Activated naive CD4-positive, alpha-beta T cell treated with anti-CD3 and anti-CD28 coated beads for 36 hours (primary cell): ENCODE measurements at regions of chr6 and their contacts with region 1.

Region 1: GRCh38 chr6:157800420-157801237 is 22.4 kb upstream of the SNX9 start:
- DNase-seq: peak; percentile 69
- H3K4me3 Mint-ChIP-seq: peak overlapping the region; percentile 6
- H3K27ac Mint-ChIP-seq: peak overlapping the region; percentile 73
- H3K4me1 Mint-ChIP-seq: peaks cover 70% of the 10 kb centered on the region
- H3K27me3 Mint-ChIP-seq: no peaks in the 10 kb centered on the region

Region 2: DNA sequence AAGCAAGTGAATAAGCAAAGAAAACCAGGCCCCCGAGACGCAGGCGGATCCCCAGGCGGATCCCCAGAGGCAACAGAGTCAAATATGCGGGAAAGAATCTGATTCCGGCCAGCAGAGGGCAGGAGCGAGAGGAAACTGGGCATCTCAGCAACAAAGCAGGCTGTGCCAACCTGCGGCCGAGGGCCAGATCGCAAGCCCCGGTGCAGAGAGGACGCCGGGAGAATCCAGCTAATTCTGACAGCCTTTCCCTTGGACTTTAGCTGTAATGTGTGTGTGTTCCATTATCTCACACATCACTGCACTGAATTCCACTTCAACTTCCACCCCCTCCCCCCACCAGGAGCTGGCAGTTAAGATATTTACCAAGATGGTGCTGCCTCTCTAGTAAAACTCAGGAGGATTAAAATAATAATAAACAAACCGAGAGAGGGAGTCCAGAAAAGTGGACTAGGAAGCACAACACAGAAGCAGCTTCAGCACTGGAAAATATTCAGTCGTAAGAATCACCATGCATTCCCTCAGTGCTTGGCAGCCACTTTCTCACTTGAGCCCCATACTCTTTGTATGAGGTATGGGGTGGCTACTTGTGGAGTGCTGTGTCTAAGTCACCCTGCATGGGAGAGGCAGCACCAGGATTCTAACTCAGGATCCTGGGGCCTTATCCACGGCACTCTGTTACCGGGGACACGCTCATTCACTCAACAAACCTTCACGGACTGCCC is 43.8 kb before region 1 on chr6:
- CTCF ChIA-PET with region 1: interaction called, 15 read pairs
- intact Hi-C with region 1: no loop called
- DNase-seq: peak; percentile 94
- H3K4me3 Mint-ChIP-seq: peak overlapping the region; percentile 28
- H3K27ac Mint-ChIP-seq: peak overlapping the region; percentile 89
- H3K4me1 Mint-ChIP-seq: peaks cover 93% of the 10 kb centered on the region
- H3K27me3 Mint-ChIP-seq: no peaks in the 10 kb centered on the region

Region 3: GRCh38 chr6:157814883-157815282 is 14.3 kb after region 1 on chr6:
- CTCF ChIA-PET with region 1: interaction called, 3 read pairs
- intact Hi-C with region 1: loop called (anchors 1 kb)
- DNase-seq: peak; percentile 42
- H3K4me3 Mint-ChIP-seq: no peak overlapping the region
- H3K27ac Mint-ChIP-seq: peak overlapping the region; percentile 43
- H3K4me1 Mint-ChIP-seq: peaks cover 59% of the 10 kb centered on the region
- H3K27me3 Mint-ChIP-seq: no peaks in the 10 kb centered on the region

Region 4: DNA sequence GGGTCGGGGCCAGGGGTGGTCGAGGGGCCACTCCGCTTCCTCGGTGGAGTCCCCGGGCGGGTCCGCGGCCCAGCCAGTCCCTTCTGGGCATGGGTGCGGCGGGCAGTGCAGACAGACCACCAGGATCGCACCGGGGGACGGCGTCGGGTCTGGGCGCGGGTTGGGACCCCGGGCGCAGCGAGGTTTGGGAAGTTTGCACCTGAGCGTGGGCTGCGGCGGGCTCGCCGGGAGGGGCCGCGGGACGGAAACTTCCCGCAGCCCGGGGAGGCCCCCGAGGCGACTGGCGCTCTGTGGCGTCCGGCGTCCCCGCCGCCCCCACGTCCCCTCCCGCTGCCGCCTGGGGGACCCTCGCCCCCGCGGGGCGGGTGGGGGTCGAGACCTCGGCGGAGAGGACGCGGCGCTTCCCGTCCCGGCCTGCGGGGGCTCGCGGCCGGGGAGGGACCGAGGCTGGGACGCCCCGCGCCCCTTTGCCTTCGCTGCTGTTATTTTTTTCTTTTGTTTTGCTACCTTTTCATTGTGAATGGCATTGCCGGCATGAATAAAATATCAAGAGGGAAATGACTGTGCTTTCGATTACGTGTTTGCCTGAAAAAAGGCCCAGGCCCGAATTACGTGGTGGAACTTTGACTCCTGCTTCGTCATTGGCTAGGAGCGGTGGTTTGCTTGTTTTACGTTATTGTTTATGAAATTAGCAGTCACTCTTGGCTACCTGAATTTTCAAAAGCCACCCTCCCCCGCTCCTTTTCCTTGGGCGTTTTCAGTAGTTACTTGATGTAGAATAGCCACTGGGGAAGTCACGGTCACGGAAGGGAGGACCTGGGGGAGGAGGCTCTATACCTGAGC is 23.1 kb after region 1 on chr6:
- CTCF ChIA-PET with region 1: interaction called, 3 read pairs
- intact Hi-C with region 1: loop called (anchors 1 kb)
- DNase-seq: peak; percentile 96
- H3K4me3 Mint-ChIP-seq: peak overlapping the region; percentile 80
- H3K27ac Mint-ChIP-seq: peak overlapping the region; percentile 96
- H3K4me1 Mint-ChIP-seq: peaks cover 42% of the 10 kb centered on the region
- H3K27me3 Mint-ChIP-seq: peaks cover 4% of the 10 kb centered on the region

Region 5: DNA sequence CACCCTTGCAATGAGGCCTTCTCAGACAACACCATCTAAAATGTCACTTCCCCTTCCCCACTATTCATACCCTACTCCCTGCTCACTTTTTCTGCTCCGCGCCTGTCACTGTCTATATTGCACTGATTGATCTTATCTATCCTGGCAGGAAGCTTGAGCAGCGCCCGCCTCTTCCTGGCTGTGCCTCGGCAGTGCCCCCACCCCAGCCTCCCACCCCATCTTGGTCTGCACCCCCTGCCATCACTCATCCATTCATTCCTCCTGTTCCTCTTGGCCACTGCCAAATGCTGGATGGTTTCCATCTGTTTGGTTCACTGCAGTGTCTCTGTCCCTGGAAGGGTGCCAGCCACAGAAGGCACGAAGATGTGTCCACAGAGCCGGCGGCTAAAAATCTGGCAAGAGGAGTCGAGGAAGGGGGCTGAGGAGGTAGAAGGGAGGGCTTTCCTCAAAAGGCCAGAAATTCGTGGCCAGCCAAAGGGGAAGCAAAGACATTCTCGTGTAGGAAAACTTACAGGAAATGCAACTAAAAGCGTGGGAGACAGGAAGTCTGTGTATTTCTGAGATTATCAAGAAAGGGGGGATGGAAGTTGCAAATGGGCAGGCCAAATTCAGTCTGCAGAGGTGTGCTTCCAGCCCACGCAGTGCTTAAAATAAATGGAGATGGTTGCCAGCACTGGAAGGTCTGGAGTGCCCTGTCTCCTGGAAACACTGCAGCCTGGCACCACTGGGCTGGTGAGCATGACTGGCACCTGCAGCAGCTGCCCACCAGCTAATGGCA is 208.7 kb after region 1 on chr6:
- CTCF ChIA-PET with region 1: no interaction called
- intact Hi-C with region 1: no loop called
- DNase-seq: peak; percentile 51
- H3K4me3 Mint-ChIP-seq: peak overlapping the region; percentile 42
- H3K27ac Mint-ChIP-seq: peak overlapping the region; percentile 77
- H3K4me1 Mint-ChIP-seq: peaks cover 80% of the 10 kb centered on the region
- H3K27me3 Mint-ChIP-seq: no peaks in the 10 kb centered on the region